ENCODE measurements at regions of chr3 and their contacts with region 1.

Region 1: DNA sequence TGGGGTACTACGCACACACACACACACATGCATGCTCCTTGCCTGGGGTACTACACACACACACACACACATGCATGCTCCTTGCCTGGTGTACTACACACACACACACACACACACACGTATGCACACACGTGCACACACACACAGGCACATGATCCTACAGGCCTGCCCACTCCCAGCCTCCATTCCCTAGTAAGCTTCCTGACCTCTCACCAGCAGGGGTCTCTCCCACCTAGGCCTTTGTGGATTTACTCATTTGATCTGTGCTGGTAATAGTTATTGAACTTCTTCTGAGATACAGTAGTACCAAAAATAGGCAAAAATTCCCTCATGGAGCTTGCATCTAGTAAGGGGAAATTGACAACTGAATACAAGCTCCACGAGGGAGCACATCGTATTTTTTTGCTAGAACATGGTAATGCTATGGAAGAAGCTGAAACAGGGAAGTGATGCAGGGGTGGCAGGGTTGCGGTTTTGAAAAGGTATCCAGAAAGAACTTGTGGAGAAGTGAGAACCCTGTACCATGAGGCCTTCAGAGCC is 19.1 kb downstream of the TTC21A start:
- DNase-seq: no peak
- CTCF ChIP-seq: peak; percentile 42

Region 2: GRCh38 chr3:39097716-39098472 is 28.7 kb before region 1 on chr3:
- CTCF ChIA-PET with region 1: no interaction called
- POLR2A ChIA-PET with region 1: no interaction called
- DNase-seq: no peak
- CTCF ChIP-seq: no peak

Region 3: GRCh38 chr3:39141171-39141995 is 14.8 kb after region 1 on chr3:
- CTCF ChIA-PET with region 1: interaction called, 26 read pairs
- POLR2A ChIA-PET with region 1: interaction called, 10 read pairs
- DNase-seq: no peak
- CTCF ChIP-seq: no peak

Region 4: DNA sequence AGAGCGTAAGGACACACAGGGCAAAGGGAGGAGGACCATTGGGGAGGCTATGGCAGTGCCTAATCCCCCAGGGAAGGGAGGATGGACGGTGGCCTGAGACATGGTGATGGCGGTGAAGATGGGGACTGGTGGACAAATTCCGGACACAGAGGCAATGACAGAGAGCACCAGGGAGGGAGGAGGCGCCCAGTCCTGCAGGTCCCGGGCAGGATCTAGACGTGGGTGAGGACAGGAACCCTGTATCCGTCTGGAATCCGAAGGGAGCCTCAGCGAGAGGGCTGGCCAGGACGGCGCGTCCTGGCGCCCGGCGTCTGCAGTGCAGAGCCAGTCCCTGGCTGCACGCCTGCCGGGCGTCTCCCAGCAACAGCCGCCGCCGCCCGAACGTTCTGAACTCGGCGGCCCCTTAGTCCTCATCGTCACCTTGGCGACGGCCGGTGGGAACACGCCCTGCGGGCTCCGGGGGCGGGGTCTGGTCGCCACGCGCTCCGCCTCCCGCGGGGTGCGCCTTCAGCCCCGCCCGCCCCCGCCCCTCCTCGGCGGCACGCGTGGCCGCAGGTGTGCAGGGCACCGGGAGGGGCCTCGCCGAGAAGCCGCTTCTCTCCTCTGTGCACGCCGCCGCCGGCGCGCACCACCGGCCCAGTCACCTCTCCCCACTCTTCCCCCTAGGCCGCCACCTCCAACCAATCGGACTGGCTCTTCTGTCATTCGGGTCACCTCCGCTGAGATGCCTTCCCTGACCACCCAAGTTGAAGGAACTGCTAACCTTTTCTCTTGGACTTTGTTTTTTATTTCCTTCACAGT is 54.1 kb after region 1 on chr3:
- CTCF ChIA-PET with region 1: interaction called, 12 read pairs
- POLR2A ChIA-PET with region 1: interaction called, 3 read pairs
- DNase-seq: peak; percentile 95
- CTCF ChIP-seq: no peak